OCI-LY7 (cell line): ENCODE measurements at regions of chr17 and their contacts with region 1.

Region 1: DNA sequence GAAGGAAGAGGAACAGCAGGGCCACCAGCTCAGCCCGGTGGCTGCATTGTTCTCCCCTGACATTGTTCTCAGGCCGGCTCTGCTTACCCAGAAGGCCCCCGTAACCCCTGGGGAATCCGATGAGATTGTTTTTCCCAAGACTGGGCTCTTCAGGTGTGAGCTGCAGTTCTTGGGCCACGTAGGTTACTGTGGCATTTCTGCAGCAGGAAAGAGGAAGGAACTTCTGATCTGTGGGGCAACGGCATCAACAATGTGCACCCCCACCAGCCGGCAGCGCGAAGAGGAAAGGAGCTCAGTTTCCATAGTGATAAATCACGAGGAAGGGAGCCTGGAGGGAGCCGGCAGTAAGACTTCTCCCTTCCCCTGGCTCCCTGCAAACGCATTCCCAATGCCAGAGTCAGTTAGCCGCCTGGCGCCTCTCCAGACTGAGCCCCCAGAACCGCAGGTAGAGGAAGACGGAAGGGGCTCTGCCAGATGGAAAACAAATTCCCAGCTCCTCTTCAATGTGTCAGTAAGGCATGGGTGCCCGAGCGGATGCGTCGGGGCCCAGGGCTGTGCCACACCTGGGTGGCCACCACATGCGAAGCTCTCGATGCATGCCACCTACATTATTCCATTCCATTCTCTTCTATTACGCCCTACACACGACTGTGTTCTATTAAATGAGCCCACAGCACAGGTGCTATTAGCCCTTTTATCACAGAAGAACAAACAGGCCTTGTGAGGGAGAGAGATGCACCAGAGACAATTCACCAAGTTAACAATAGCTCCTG is 21.5 kb upstream of the PECAM1 start:
- DNase-seq: peak; percentile 92
- H3K4me3 ChIP-seq: peak overlapping the region; percentile 70
- H3K27ac ChIP-seq: peak overlapping the region; percentile 86
- H3K4me1 ChIP-seq: peaks cover 60% of the 10 kb centered on the region
- CTCF ChIP-seq: no peak

Region 2: GRCh38 chr17:64091116-64091515 is 321.1 kb before region 1 on chr17:
- CTCF ChIA-PET with region 1: no interaction called
- POLR2A ChIA-PET with region 1: interaction called, 11 read pairs
- intact Hi-C with region 1: no loop called
- DNase-seq: peak; percentile 35
- H3K4me3 ChIP-seq: peak overlapping the region; percentile 1
- H3K27ac ChIP-seq: peak overlapping the region; percentile 25
- H3K4me1 ChIP-seq: peaks cover 66% of the 10 kb centered on the region
- CTCF ChIP-seq: no peak

Region 3: GRCh38 chr17:64145757-64146417 is 266.3 kb before region 1 on chr17:
- CTCF ChIA-PET with region 1: no interaction called
- POLR2A ChIA-PET with region 1: interaction called, 5 read pairs
- intact Hi-C with region 1: loop called (anchors 5 kb)
- DNase-seq: peak; percentile 100
- H3K4me3 ChIP-seq: peak overlapping the region; percentile 84
- H3K27ac ChIP-seq: peak overlapping the region; percentile 93
- H3K4me1 ChIP-seq: peaks cover 30% of the 10 kb centered on the region
- CTCF ChIP-seq: peak; percentile 24; the same call in 1 of the 2 replicates

Region 4: GRCh38 chr17:64399071-64399766 is 13.0 kb before region 1 on chr17:
- CTCF ChIA-PET with region 1: interaction called, 4 read pairs
- POLR2A ChIA-PET with region 1: interaction called, 13 read pairs
- intact Hi-C with region 1: loop called (anchors 1 kb)
- DNase-seq: no peak
- H3K4me3 ChIP-seq: no peak overlapping the region
- H3K27ac ChIP-seq: no peak overlapping the region
- H3K4me1 ChIP-seq: peaks cover 30% of the 10 kb centered on the region
- CTCF ChIP-seq: no peak